OCI-LY7 (cell line): ENCODE measurements at regions of chr2 and their contacts with region 1.

Region 1: GRCh38 chr2:197369228-197369932 is 58.8 kb upstream of the ANKRD44 start:
- DNase-seq: no peak
- H3K4me3 ChIP-seq: no peak overlapping the region
- H3K27ac ChIP-seq: no peak overlapping the region
- H3K4me1 ChIP-seq: peaks cover 4% of the 10 kb centered on the region
- CTCF ChIP-seq: no peak

Region 2: GRCh38 chr2:197322724-197323720 is 46.4 kb before region 1 on chr2:
- CTCF ChIA-PET with region 1: no interaction called
- POLR2A ChIA-PET with region 1: interaction called, 4 read pairs
- intact Hi-C with region 1: loop called (anchors 5 kb)
- DNase-seq: no peak
- H3K4me3 ChIP-seq: no peak overlapping the region
- H3K27ac ChIP-seq: no peak overlapping the region
- H3K4me1 ChIP-seq: peaks cover 8% of the 10 kb centered on the region
- CTCF ChIP-seq: no peak